Calu3 (cell line): ENCODE measurements at regions of chr3 and their contacts with region 1.

Region 1: DNA sequence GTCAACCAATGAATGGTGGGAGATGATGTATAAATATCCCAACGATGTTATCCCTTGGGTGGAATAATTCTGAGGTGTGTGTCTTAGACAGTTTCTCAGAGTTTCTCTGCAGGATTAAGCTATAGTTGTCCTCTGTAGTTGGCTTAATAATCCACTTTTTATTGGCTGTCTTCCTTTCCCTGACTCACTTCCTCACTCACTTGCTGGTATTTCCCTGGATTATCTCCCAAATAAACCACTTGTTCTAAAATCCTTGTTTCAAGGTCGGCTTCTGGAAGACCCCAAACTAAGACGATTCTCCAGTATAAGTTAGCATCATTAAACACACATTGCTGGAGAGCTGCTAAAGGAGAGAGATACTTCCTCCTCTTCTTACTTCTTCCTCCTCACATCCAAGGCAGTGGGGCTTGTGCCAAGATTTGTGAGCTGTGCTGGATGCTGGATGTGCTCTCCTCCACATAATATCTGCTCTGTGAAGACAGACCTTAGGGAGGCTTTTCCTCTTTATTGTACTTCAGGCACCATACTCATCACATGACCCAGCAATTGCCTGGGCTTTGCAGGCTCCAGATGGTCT is 22.5 kb upstream of the ROPN1 start:
- DNase-seq: no peak
- H3K4me3 Mint-ChIP-seq: no peak overlapping the region
- H3K27ac Mint-ChIP-seq: no peak overlapping the region
- H3K4me1 Mint-ChIP-seq: peaks cover 12% of the 10 kb centered on the region
- H3K27me3 Mint-ChIP-seq: peaks cover 86% of the 10 kb centered on the region
- CTCF ChIP-seq: no peak

Region 2: DNA sequence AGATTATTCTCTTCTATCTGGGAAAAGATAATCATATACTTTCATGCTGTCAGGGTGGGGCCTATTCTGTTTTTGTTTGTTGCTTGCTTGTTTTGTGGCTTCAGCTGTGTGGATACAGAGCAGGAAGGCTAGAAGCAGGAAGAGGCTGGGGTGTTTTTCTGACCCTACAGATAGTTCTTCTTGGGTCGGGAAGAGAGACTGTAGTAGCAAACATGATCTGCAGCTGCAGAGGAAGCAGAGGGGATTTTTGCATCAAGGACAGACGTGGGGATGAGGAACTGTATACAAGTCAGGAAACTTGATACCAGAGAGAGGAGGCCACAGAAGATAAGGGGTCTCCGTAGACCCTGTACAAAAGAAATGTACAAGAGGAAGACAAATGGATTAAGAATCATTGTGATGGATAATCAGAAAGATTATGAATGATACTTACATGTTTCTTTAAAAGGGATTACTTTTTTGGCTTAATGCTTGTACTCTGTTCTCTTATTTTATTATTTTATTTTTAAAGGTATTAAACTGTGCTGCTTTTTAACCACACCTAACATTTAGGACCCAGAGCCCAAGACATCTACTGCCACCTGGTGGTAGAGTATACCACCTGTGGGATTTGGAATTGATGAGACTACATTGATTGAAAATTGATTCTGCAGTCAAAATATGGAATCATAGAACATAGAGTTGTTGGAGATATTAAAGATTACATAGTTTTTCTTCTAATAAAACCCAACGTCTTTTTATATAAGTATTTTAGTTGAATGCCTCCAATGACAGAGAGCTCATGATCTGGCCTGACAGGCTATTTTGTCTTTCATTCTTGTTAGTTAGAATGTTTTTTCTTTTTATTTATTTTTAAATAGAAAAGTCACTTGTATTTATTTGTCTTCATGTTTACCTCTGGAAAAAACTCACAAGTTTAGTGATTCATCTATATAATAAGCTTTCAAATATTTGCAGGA is 64.8 kb after region 1 on chr3:
- CTCF ChIA-PET with region 1: no interaction called
- intact Hi-C with region 1: loop called (anchors 1 kb)
- DNase-seq: peak; percentile 31
- H3K4me3 Mint-ChIP-seq: no peak overlapping the region
- H3K27ac Mint-ChIP-seq: no peak overlapping the region
- H3K4me1 Mint-ChIP-seq: no peaks in the 10 kb centered on the region
- H3K27me3 Mint-ChIP-seq: peaks cover 79% of the 10 kb centered on the region
- CTCF ChIP-seq: no peak

Region 3: DNA sequence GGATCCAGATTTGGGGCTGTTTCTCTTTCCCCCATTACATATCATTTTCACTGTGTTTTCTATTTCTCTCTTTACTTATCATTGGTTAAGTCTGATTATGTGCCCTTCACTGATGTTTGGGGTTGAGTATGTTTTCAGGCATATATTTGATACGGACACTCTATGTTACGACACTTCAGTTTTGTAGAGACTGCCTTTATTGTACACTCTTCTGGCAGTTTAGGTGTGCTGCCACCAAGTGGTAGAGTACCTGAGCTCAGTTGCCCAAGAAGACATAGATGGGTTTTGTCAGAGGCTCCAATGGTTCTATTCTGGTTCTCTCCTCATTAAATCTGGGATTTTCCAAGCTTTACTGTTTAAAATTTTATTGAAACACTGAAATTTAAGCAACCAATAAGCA is 232.5 kb after region 1 on chr3:
- CTCF ChIA-PET with region 1: no interaction called
- intact Hi-C with region 1: loop called (anchors 10 kb)
- DNase-seq: peak; percentile 35
- H3K4me3 Mint-ChIP-seq: no peak overlapping the region
- H3K27ac Mint-ChIP-seq: no peak overlapping the region
- H3K4me1 Mint-ChIP-seq: peaks cover 25% of the 10 kb centered on the region
- H3K27me3 Mint-ChIP-seq: peaks cover 50% of the 10 kb centered on the region
- CTCF ChIP-seq: no peak

Region 4: GRCh38 chr3:124281453-124282316 is 267.2 kb after region 1 on chr3:
- CTCF ChIA-PET with region 1: interaction called, 3 read pairs
- intact Hi-C with region 1: loop called (anchors 1 kb)
- DNase-seq: peak; percentile 39
- H3K4me3 Mint-ChIP-seq: no peak overlapping the region
- H3K27ac Mint-ChIP-seq: no peak overlapping the region
- H3K4me1 Mint-ChIP-seq: no peaks in the 10 kb centered on the region
- H3K27me3 Mint-ChIP-seq: peaks cover 87% of the 10 kb centered on the region
- CTCF ChIP-seq: no peak

Region 5: GRCh38 chr3:124315215-124316033 is 301.0 kb after region 1 on chr3:
- CTCF ChIA-PET with region 1: no interaction called
- intact Hi-C with region 1: no loop called
- DNase-seq: peak; percentile 30
- H3K4me3 Mint-ChIP-seq: no peak overlapping the region
- H3K27ac Mint-ChIP-seq: no peak overlapping the region
- H3K4me1 Mint-ChIP-seq: peaks cover 8% of the 10 kb centered on the region
- H3K27me3 Mint-ChIP-seq: peaks cover 4% of the 10 kb centered on the region
- CTCF ChIP-seq: no peak

Region 6: GRCh38 chr3:124467980-124468902 is 453.8 kb after region 1 on chr3:
- CTCF ChIA-PET with region 1: no interaction called
- intact Hi-C with region 1: loop called (anchors 2 kb)
- DNase-seq: peak; percentile 66
- H3K4me3 Mint-ChIP-seq: no peak overlapping the region
- H3K27ac Mint-ChIP-seq: no peak overlapping the region
- H3K4me1 Mint-ChIP-seq: no peaks in the 10 kb centered on the region
- H3K27me3 Mint-ChIP-seq: peaks cover 71% of the 10 kb centered on the region
- CTCF ChIP-seq: peak; percentile 90

Region 7: DNA sequence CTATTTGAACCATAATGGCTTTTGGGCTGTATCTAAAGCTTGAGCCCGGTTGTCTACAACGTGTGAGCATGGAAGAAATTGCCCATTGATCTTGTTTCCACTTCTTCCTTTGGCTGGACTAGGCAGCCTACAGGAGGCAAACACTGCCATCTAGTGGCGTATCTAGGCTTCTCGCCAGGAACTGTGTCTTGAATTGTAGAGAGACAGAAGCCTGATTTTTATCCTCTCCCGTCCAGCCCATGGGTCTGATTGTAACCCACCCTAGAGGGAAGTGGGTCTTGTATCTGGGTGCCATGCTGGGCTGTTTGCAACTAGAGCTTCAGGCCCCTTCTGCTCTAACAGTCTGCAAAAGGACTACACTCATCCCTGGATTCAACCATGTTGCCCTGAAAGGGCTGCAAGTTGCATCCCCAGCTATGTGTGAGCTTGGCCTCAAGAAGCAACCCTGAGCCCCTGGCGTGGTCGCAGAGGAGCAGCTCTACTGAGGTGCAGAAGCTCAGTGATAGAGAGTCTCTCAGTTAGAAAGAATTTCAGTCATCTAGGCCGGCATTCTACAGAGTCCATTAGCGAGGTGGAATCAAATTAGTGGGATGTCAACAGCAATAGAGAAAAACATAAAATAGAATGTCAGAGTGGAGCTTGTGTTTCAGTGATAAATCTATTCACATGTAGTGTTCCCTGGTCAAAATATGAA is 545.6 kb after region 1 on chr3:
- CTCF ChIA-PET with region 1: no interaction called
- intact Hi-C with region 1: loop called (anchors 10 kb)
- DNase-seq: peak; percentile 74
- H3K4me3 Mint-ChIP-seq: no peak overlapping the region
- H3K27ac Mint-ChIP-seq: no peak overlapping the region
- H3K4me1 Mint-ChIP-seq: peaks cover 24% of the 10 kb centered on the region
- H3K27me3 Mint-ChIP-seq: peaks cover 71% of the 10 kb centered on the region
- CTCF ChIP-seq: peak; percentile 69